CD4-positive, alpha-beta T cell (primary cell): ENCODE measurements at regions of chr4 and their contacts with region 1.

Region 1: DNA sequence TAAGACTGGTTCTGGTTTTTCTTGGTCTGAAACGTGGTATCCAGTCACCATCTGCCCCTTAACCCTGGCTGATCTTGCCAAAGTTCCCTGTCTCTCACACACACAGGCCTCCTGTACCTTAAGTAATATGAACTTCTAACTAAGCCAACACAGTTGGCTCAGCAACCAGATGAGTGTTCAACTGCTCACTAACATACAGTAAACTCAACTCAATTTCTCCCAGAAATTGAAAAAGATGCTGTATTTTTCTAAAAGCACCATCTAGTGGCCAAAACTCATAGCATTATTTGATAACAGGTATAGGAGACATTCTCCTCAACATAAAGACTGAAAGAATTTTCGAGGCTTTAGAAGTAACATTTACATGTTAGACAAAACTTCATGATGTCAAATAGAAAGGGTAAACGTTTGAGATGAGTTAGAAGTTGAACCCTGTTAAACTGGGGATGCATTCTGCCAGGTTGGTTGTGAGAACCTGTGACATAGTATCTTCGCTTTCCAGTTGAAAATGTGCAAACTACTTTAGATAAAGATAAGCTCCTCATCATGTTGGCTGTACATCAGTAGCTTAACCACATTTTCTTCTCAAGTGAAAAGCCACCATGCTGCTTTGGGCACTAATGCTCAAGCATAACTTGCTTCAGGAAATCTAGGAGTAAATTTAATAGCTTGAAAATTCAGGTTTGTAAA is 31.2 kb downstream of the CCNI start:
- DNase-seq: peak in 3 of 14 experiments; percentile 48 to 64 (median 62)
- ATAC-seq: peak; percentile 57
- H3K4me3 ChIP-seq: no peak overlapping the region
- H3K4me3 Mint-ChIP-seq: no peak overlapping the region
- H3K27ac ChIP-seq: no peak overlapping the region
- H3K27ac Mint-ChIP-seq: peak overlapping the region; percentile 1
- H3K4me1 ChIP-seq: no peaks in the 10 kb centered on the region
- H3K4me1 Mint-ChIP-seq: peaks cover 29% of the 10 kb centered on the region
- H3K27me3 ChIP-seq: no peaks in the 10 kb centered on the region
- H3K27me3 Mint-ChIP-seq: no peaks in the 10 kb centered on the region
- CTCF ChIP-seq: peak; percentile 78

Region 2: GRCh38 chr4:76511947-76512346 is 532.7 kb before region 1 on chr4:
- CTCF ChIA-PET with region 1: no interaction called
- POLR2A ChIA-PET with region 1: no interaction called
- intact Hi-C with region 1: loop called (anchors 1 to 5 kb)
- DNase-seq: no peak
- ATAC-seq: no peak
- H3K4me3 ChIP-seq: no peak overlapping the region
- H3K4me3 Mint-ChIP-seq: no peak overlapping the region
- H3K27ac ChIP-seq: no peak overlapping the region
- H3K27ac Mint-ChIP-seq: no peak overlapping the region
- H3K4me1 ChIP-seq: no peaks in the 10 kb centered on the region
- H3K4me1 Mint-ChIP-seq: no peaks in the 10 kb centered on the region
- H3K27me3 ChIP-seq: peaks cover 0 to 3% of the 10 kb centered on the region in 2 experiments
- H3K27me3 Mint-ChIP-seq: peaks cover 8% of the 10 kb centered on the region
- CTCF ChIP-seq: no peak

Region 3: GRCh38 chr4:76896731-76897535 is 147.7 kb before region 1 on chr4:
- CTCF ChIA-PET with region 1: no interaction called
- POLR2A ChIA-PET with region 1: interaction called, 3 read pairs
- intact Hi-C with region 1: loop called (anchors 5 kb)
- DNase-seq: peak in 11 of 14 experiments; percentile 12 to 61 (median 28)
- ATAC-seq: peak; percentile 74
- H3K4me3 ChIP-seq: peak overlapping the region; percentile 59
- H3K4me3 Mint-ChIP-seq: no peak overlapping the region
- H3K27ac ChIP-seq: no peak overlapping the region
- H3K27ac Mint-ChIP-seq: no peak overlapping the region
- H3K4me1 ChIP-seq: peaks cover 15% of the 10 kb centered on the region
- H3K4me1 Mint-ChIP-seq: peaks cover 13% of the 10 kb centered on the region
- H3K27me3 ChIP-seq: peaks cover 36 to 41% of the 10 kb centered on the region in 2 experiments
- H3K27me3 Mint-ChIP-seq: peaks cover 54% of the 10 kb centered on the region
- CTCF ChIP-seq: no peak

Region 4: GRCh38 chr4:77082886-77083608 is 38.4 kb after region 1 on chr4:
- CTCF ChIA-PET with region 1: no interaction called
- POLR2A ChIA-PET with region 1: no interaction called
- intact Hi-C with region 1: loop called in 1 of 2 experiments (anchors 5 kb)
- DNase-seq: no peak
- ATAC-seq: no peak
- H3K4me3 ChIP-seq: no peak overlapping the region
- H3K4me3 Mint-ChIP-seq: no peak overlapping the region
- H3K27ac ChIP-seq: no peak overlapping the region
- H3K27ac Mint-ChIP-seq: no peak overlapping the region
- H3K4me1 ChIP-seq: peaks cover 5% of the 10 kb centered on the region
- H3K4me1 Mint-ChIP-seq: peaks cover 25% of the 10 kb centered on the region
- H3K27me3 ChIP-seq: no peaks in the 10 kb centered on the region
- H3K27me3 Mint-ChIP-seq: no peaks in the 10 kb centered on the region
- CTCF ChIP-seq: no peak